ENCODE measurements at regions of chr10 and their contacts with region 1.

Region 1: DNA sequence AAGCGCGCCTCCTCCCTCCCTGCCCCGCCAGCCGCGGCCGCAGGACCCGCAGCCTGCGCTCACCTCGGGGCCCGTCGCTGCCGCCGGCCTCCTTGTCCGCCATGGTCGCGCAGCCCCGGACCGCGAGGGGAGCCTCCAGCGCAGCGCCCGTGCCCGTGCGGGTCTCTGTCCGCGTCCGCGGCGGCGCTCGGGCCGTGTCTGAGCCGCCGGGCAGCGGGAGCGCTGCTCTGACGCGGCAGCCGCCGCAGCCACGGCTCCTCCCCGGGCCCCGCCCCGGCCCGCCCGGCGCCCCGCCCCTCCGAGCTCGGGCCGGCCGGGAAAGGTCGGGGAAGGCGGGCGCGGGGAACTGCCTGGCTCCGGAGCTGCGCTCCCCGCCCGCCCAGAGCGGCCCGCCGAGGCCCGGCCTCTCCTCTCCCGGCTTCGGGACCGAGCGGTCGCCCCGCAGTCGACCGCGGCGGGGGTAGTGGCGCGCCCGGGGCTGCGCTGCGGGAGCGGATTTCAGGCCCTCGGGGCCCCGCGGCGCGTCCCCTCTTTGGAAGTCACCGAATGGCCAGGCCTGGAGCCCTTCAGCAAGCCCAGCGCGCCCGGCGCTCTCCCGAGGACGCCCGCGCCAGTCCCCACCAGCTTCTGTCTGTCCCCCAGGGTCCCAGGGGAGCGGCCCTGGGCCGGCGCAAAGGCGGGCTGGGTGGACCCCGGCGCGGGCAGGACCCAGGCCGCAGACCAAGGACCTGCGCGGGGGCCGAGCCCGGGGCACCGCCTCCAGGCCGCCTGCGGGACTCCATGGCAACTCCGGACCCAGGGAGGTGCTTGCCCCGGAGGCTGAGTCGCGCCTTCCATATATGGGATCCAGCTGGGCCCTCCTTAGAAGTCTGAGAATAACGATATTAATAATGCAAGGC is at the start of gene HSPA12A:
- DNase-seq: peak in 1 of 2 donors; percentile 94
- H3K4me3 ChIP-seq: peak within 1 kb of the TSS; percentile 97 to 100
- H3K27ac ChIP-seq: peak within 1 kb of the TSS; percentile 92 to 93
- H3K4me1 ChIP-seq: peaks cover 0 to 3% of the 10 kb centered on the region in 2 donors
- H3K27me3 ChIP-seq: no peaks in the 10 kb centered on the region
- CTCF ChIP-seq: no peak
- total RNA-seq, gene HSPA12A: 5.5 TPM

Region 2: DNA sequence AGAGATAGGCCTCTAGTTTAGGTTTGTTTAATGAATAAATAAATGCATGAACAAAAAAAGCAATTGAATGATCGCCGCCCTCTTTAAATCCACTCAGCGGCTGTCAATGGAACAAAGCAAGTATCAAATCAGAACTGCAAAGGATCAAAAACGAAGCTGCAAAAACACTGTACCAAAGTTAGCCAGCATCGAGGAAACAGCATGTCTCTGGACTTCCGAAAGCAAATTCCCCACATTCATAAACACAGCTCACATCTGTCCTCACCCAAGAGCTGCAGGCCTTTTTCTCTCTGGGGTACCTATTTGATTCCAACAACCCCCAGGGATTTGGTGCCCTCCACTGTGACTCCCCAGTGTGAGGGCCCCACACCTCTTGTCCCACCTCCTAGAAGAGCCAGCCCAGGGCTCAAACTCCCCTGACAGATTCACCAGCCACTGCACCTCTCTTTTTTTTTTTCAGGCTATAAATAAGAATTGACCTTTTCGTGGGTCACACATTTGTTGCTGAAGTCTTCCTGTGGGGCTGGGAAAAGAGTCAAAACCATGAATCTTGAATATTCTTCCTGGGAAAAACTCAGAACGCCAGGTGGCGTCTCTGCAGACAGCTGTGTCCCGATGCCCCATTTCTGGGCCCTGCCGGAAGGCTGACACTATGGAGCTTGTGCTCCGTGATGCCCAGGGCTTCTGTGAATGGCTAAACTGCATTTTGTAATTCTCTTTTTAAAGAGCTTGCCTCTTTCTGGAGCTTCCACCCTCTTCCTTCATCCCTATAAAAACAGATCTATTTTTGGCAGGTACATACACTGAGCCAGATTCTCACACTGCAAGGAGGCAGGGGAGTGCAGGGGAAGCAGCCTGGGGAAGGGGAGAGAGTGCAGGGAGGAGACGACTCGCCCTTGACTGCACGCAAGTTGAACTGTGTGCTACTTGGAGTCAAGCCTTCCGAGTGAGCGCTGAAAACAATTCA is 52.0 kb before region 1 on chr10:
- intact Hi-C with region 1: loop called (anchors 1 kb)
- DNase-seq: peak in 1 of 2 donors; percentile 81
- H3K4me3 ChIP-seq: peak overlapping the region in 1 of 2 donors; percentile 20
- H3K27ac ChIP-seq: peak overlapping the region; percentile 68 to 79
- H3K4me1 ChIP-seq: peaks cover 13 to 35% of the 10 kb centered on the region in 2 donors
- H3K27me3 ChIP-seq: no peaks in the 10 kb centered on the region
- CTCF ChIP-seq: peak; percentile 24 to 64 (median 43)

Region 3: GRCh38 chr10:116708391-116708821 is 34.2 kb before region 1 on chr10:
- intact Hi-C with region 1: loop called (anchors 2 kb)
- DNase-seq: no peak
- H3K4me3 ChIP-seq: no peak overlapping the region
- H3K27ac ChIP-seq: peak overlapping the region; percentile 50 to 59
- H3K4me1 ChIP-seq: peaks cover 0 to 5% of the 10 kb centered on the region in 2 donors
- H3K27me3 ChIP-seq: no peaks in the 10 kb centered on the region
- CTCF ChIP-seq: no peak

Region 4: DNA sequence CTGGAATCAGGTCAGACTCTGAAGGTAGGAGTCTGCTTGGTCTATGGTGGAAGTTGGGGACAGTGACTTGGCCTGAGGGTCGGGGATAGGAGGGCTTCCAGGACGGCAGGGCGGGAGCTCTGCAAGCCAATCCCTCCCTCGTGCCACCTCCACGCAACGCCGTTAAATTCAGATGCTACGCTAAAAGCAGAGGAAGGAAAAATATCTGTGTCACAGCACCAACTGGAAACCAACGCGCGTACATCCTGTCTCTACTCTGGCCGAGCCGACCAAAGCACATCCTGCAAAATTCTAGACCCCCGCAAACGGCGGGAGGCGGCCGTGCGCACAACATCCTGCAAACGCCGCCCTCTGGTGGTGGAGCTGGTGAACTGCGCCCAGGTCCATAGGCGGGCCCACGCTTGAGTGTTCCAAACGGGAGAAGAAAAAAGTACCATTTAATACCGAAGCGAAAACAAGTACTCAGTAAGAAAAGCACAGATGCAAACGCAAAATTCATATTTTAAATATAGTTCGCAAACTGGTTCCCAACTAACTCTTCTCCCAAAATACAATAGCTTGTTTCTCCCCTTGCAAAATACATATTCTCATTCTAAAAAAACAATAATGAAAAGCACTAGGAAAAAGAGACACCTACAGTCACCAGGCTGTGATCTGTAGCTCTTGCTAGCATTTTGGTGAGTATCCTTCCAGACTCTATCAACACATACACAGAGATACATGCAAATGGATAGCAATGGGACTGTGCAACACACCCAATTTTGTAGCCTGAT is 45.5 kb after region 1 on chr10:
- intact Hi-C with region 1: loop called (anchors 5 kb)
- DNase-seq: peak in 1 of 2 donors; percentile 86
- H3K4me3 ChIP-seq: peak overlapping the region; percentile 24 to 51
- H3K27ac ChIP-seq: no peak overlapping the region
- H3K4me1 ChIP-seq: no peaks in the 10 kb centered on the region
- H3K27me3 ChIP-seq: no peaks in the 10 kb centered on the region
- CTCF ChIP-seq: peak; percentile 91 to 100 (median 98)

Region 5: DNA sequence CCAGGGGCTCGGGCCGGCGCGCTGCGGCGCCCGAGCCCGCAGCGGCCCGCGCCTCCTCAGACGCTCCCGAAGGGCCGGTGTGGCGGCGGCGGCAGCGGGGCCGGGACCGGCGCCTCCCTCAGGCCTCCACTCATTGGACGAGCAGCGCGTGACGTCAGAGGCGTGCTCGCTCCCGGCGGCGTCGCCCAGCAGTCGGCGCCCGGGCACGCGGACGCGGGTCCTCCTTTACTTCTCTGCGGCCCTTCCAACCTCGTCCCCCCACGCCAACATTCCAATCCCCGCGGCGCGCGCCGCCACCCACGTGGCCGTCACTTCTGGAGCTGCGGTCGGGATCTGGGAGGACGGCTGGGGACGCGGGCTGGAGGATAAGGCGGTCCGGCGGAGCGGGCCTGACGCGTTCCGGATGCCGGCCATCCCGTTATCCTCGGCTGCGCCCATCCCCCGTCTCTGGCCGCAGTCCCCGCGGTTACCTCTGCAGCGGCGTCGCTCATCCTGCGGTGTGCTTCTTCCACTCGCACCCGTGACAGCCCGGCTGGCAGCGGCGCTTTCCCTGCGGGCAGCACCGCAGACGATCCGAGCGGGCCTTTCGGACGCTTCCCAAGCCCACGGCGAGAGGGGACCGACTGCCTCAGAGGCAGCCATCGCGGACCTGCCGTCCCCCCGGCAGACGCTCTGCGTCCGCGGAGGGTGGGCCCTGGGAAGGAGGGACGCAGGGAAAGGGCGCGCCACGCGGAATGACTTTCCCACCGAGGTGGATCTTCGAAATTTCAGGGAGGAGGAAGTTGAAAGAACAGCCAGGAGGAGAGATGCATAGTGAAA is 633.0 kb after region 1 on chr10 and contains the start of gene PDZD8:
- intact Hi-C with region 1: loop called (anchors 2 kb)
- DNase-seq: peak; percentile 68 to 96
- H3K4me3 ChIP-seq: peak within 1 kb of the TSS; percentile 92 to 96
- H3K27ac ChIP-seq: peak within 1 kb of the TSS; percentile 96 to 97
- H3K4me1 ChIP-seq: peaks cover 0 to 13% of the 10 kb centered on the region in 2 donors
- H3K27me3 ChIP-seq: no peaks in the 10 kb centered on the region
- CTCF ChIP-seq: no peak
- total RNA-seq, gene PDZD8: 21.0 TPM

Region 6: GRCh38 chr10:118046395-118047156 is 1304.0 kb after region 1 on chr10 and contains the start of gene RAB11FIP2:
- intact Hi-C with region 1: loop called (anchors 10 kb)
- DNase-seq: peak; percentile 82 to 98
- H3K4me3 ChIP-seq: peak within 1 kb of the TSS; percentile 75 to 96
- H3K27ac ChIP-seq: peak within 1 kb of the TSS; percentile 91 to 98
- H3K4me1 ChIP-seq: peaks cover 2 to 22% of the 10 kb centered on the region in 2 donors
- H3K27me3 ChIP-seq: no peaks in the 10 kb centered on the region
- CTCF ChIP-seq: peak in 1 of 3 experiments; percentile 17
- total RNA-seq, gene RAB11FIP2: 2.8 TPM